ENCODE measurements at regions of chr20 and their contacts with region 1.

Region 1: GRCh38 chr20:52572687-52573086 is 381.1 kb upstream of the ZFP64 start:
- DNase-seq: peak; percentile 42
- H3K4me3 ChIP-seq: no peak overlapping the region
- H3K27ac ChIP-seq: no peak overlapping the region
- H3K4me1 ChIP-seq: peaks cover 13% of the 10 kb centered on the region
- H3K27me3 ChIP-seq: no peaks in the 10 kb centered on the region
- CTCF ChIP-seq: no peak

Region 2: GRCh38 chr20:52269321-52269720 is 303.4 kb before region 1 on chr20:
- CTCF ChIA-PET with region 1: no interaction called
- POLR2A ChIA-PET with region 1: no interaction called
- intact Hi-C with region 1: loop called (anchors 2 kb)
- DNase-seq: peak; percentile 93
- H3K4me3 ChIP-seq: no peak overlapping the region
- H3K27ac ChIP-seq: peak overlapping the region; percentile 81
- H3K4me1 ChIP-seq: peaks cover 61% of the 10 kb centered on the region
- H3K27me3 ChIP-seq: no peaks in the 10 kb centered on the region
- CTCF ChIP-seq: no peak

Region 3: GRCh38 chr20:52552181-52552872 is 20.4 kb before region 1 on chr20:
- CTCF ChIA-PET with region 1: no interaction called
- POLR2A ChIA-PET with region 1: no interaction called
- intact Hi-C with region 1: no loop called
- DNase-seq: no peak
- H3K4me3 ChIP-seq: no peak overlapping the region
- H3K27ac ChIP-seq: no peak overlapping the region
- H3K4me1 ChIP-seq: no peaks in the 10 kb centered on the region
- H3K27me3 ChIP-seq: no peaks in the 10 kb centered on the region
- CTCF ChIP-seq: no peak

Region 4: DNA sequence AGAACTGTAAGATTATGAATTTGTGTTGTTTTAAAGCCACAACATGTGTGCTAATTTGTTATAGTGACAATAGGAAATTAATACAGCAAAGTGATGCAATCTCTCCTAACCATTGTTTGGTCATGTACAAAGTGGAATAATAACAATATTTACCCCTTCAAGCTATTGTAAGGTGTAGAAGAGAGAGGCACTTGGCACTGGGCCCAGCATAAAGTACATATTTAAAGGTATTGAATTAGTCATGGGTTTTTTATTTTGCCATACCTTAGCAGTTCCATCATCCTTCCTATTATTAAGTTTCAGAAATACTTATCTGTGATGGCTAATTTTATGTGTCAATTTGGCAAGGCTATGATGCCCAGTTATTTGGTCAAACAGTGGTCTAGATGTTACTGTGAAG is 77.0 kb after region 1 on chr20:
- CTCF ChIA-PET with region 1: no interaction called
- POLR2A ChIA-PET with region 1: interaction called, 14 read pairs
- intact Hi-C with region 1: no loop called
- DNase-seq: no peak
- H3K4me3 ChIP-seq: no peak overlapping the region
- H3K27ac ChIP-seq: no peak overlapping the region
- H3K4me1 ChIP-seq: no peaks in the 10 kb centered on the region
- H3K27me3 ChIP-seq: no peaks in the 10 kb centered on the region
- CTCF ChIP-seq: no peak

Measured in A673 (cell line).